H1 (cell line): ENCODE measurements at regions of chr3 and their contacts with region 1.

Region 1: GRCh38 chr3:128426128-128426921 is 40.4 kb downstream of the DNAJB8 start:
- DNase-seq: peak in 1 of 2 experiments; percentile 90
- H3K4me3 ChIP-seq: peak overlapping the region in 2 of 4 experiments; percentile 10 to 48; a peak in 4 of 8 replicates
- H3K27ac ChIP-seq: no peak overlapping the region
- H3K4me1 ChIP-seq: peaks cover 0 to 23% (median 11%) of the 10 kb centered on the region in 4 experiments; a peak in 5 of 7 replicates
- H3K27me3 ChIP-seq: peaks cover 6 to 64% (median 52%) of the 10 kb centered on the region in 4 experiments
- CTCF ChIP-seq: peak in 2 of 3 experiments; percentile 96 to 97; a peak in 3 of 4 replicates
- EP300 ChIP-seq: no peak
- POLR2A ChIP-seq: no peak
- RAD21 ChIP-seq: peak; percentile 76 to 96

Region 2: GRCh38 chr3:128226795-128227395 is 199.4 kb before region 1 on chr3:
- CTCF ChIA-PET with region 1: interaction called, 16 read pairs
- POLR2A ChIA-PET with region 1: no interaction called
- DNase-seq: peak; percentile 29 to 88
- H3K4me3 ChIP-seq: no peak overlapping the region
- H3K27ac ChIP-seq: no peak overlapping the region
- H3K4me1 ChIP-seq: peaks cover 2 to 3% (median 2%) of the 10 kb centered on the region in 4 experiments; a peak in 5 of 7 replicates
- H3K27me3 ChIP-seq: no peaks in the 10 kb centered on the region; a peak in 1 of 7 replicates
- CTCF ChIP-seq: peak; percentile 89 to 97 (median 90)
- EP300 ChIP-seq: no peak
- POLR2A ChIP-seq: no peak
- RAD21 ChIP-seq: peak; percentile 81 to 91

Region 3: GRCh38 chr3:128438488-128439072 is 12.3 kb after region 1 on chr3:
- CTCF ChIA-PET with region 1: interaction called, 144 read pairs
- POLR2A ChIA-PET with region 1: interaction called, 3 read pairs
- DNase-seq: no peak
- H3K4me3 ChIP-seq: no peak overlapping the region
- H3K27ac ChIP-seq: no peak overlapping the region
- H3K4me1 ChIP-seq: peaks cover 5 to 16% (median 12%) of the 10 kb centered on the region in 4 experiments
- H3K27me3 ChIP-seq: peaks cover 0 to 17% (median 7%) of the 10 kb centered on the region in 4 experiments; a peak in 5 of 7 replicates
- CTCF ChIP-seq: peak in 2 of 3 experiments; percentile 86 to 95; a peak in 3 of 4 replicates
- EP300 ChIP-seq: no peak
- POLR2A ChIP-seq: no peak
- RAD21 ChIP-seq: peak; percentile 56 to 70

Region 4: DNA sequence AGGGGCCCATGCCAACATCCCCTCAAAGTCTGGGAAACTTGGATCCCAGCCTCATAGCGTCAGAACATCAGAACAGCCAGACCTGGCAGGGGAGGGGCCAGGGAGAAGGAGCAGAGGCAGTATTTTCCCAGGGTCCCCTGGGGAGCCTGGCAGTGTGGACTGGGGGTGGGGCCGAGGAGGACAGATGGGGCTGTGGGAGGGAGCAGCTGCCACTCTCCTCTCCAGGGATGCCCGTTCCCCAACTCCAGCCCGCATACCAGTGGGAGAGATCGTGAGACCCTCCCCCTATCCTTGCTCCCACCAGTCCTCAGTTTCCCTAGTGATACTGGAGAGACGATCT is 46.8 kb after region 1 on chr3:
- CTCF ChIA-PET with region 1: interaction called, 28 read pairs
- POLR2A ChIA-PET with region 1: no interaction called
- DNase-seq: no peak
- H3K4me3 ChIP-seq: no peak overlapping the region
- H3K27ac ChIP-seq: no peak overlapping the region
- H3K4me1 ChIP-seq: peaks cover 0 to 17% (median 4%) of the 10 kb centered on the region in 4 experiments; a peak in 5 of 7 replicates
- H3K27me3 ChIP-seq: peaks cover 47 to 85% (median 78%) of the 10 kb centered on the region in 4 experiments
- CTCF ChIP-seq: no peak
- EP300 ChIP-seq: no peak
- POLR2A ChIP-seq: no peak
- RAD21 ChIP-seq: no peak

Region 5: GRCh38 chr3:128487813-128488635 is 61.7 kb after region 1 on chr3:
- CTCF ChIA-PET with region 1: interaction called, 38 read pairs
- POLR2A ChIA-PET with region 1: interaction called, 3 read pairs
- DNase-seq: peak; percentile 62 to 93
- H3K4me3 ChIP-seq: peak overlapping the region; percentile 28 to 63 (median 32); a peak in 6 of 8 replicates
- H3K27ac ChIP-seq: no peak overlapping the region
- H3K4me1 ChIP-seq: peaks cover 5 to 83% (median 55%) of the 10 kb centered on the region in 4 experiments
- H3K27me3 ChIP-seq: peaks cover 89 to 100% (median 99%) of the 10 kb centered on the region in 4 experiments
- CTCF ChIP-seq: no peak
- EP300 ChIP-seq: no peak
- POLR2A ChIP-seq: no peak
- RAD21 ChIP-seq: no peak

Region 6: DNA sequence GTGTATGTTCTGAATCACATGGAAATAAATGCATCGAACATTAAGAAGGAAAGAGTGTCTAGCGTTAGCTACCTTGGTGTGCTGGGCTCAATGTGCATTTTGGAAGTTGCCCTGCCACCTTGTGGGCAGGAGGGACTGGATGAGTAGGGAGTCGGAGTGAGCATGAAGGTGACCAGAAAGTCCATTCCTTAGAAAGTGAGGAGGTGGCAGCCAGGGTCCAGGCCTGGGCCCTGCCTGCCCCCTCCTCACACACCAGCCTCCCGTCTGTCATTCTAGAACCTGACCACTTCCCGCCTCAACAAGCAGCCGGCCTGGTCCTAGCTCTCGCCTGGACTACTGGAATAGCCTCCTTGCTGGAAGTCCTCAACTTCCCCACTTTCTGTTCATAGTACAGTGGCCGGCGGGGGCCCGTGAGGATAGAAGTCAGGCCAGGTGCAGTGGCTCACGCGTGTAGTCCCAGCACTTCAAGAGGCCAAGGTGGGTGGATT is 76.9 kb after region 1 on chr3:
- CTCF ChIA-PET with region 1: interaction called, 83 read pairs
- POLR2A ChIA-PET with region 1: no interaction called
- DNase-seq: peak in 1 of 2 experiments; percentile 50
- H3K4me3 ChIP-seq: no peak overlapping the region
- H3K27ac ChIP-seq: no peak overlapping the region; the same call in 1 of the 2 replicates
- H3K4me1 ChIP-seq: peaks cover 0 to 2% (median 0%) of the 10 kb centered on the region in 4 experiments; a peak in 1 of 7 replicates
- H3K27me3 ChIP-seq: peaks cover 0 to 11% (median 10%) of the 10 kb centered on the region in 4 experiments; a peak in 6 of 7 replicates
- CTCF ChIP-seq: peak in 2 of 3 experiments; percentile 56 to 64; a peak in 3 of 4 replicates
- EP300 ChIP-seq: no peak
- POLR2A ChIP-seq: no peak
- RAD21 ChIP-seq: peak; percentile 54 to 70

Region 7: DNA sequence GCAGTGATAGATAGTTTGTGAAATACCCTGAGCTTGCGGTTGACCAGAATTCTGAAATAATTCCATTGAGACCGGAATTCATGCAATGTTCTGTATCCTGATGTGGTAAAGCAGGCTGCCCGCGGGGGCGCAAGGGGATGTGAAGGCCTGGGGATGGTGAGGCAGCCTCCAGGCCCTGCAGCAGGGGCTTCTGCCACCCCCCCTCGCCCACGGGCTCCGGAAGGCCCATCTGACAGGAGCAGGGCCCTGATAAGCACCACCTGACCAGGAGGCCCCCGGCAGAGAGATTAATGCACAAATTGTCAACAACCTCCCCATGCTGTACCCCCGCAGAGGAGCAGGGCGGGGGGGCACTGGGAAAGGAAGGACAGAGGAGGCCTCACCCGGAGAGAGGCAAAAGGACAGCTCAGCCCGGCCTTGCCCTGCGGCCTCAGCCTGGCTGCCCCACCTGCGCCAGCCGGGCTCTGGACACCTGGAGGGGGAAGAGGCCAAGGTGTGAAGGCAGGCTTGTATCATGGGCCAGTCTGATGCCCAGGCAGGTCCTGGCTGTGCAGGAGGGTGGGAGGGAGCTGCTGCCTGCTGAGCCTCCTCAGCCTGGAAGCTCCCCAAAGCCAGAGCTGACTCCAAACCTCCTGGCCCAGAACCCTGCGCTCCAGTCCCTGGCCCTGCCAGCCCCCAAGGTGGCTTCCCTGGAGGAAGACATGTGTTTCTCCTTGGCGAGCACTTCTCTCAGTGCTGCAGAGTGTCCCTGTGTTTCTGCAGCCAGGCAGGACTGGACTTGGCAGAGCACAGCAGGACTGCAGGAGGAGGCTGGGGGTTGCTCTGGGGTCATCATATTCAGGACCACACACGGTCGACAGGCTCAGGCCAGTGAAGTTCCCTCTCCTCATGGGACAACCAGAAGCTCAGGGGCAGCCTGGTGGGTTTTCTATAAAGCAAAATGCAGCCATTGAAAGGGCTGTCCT is 177.8 kb after region 1 on chr3:
- CTCF ChIA-PET with region 1: interaction called, 10 read pairs
- POLR2A ChIA-PET with region 1: interaction called, 3 read pairs
- DNase-seq: no peak
- H3K4me3 ChIP-seq: no peak overlapping the region
- H3K27ac ChIP-seq: no peak overlapping the region
- H3K4me1 ChIP-seq: peaks cover 0 to 2% (median 0%) of the 10 kb centered on the region in 4 experiments; a peak in 1 of 7 replicates
- H3K27me3 ChIP-seq: peaks cover 0 to 8% (median 4%) of the 10 kb centered on the region in 4 experiments; a peak in 4 of 7 replicates
- CTCF ChIP-seq: no peak
- EP300 ChIP-seq: no peak
- POLR2A ChIP-seq: no peak
- RAD21 ChIP-seq: no peak